ENCODE measurements at regions of chr3 and their contacts with region 1.

Region 1: DNA sequence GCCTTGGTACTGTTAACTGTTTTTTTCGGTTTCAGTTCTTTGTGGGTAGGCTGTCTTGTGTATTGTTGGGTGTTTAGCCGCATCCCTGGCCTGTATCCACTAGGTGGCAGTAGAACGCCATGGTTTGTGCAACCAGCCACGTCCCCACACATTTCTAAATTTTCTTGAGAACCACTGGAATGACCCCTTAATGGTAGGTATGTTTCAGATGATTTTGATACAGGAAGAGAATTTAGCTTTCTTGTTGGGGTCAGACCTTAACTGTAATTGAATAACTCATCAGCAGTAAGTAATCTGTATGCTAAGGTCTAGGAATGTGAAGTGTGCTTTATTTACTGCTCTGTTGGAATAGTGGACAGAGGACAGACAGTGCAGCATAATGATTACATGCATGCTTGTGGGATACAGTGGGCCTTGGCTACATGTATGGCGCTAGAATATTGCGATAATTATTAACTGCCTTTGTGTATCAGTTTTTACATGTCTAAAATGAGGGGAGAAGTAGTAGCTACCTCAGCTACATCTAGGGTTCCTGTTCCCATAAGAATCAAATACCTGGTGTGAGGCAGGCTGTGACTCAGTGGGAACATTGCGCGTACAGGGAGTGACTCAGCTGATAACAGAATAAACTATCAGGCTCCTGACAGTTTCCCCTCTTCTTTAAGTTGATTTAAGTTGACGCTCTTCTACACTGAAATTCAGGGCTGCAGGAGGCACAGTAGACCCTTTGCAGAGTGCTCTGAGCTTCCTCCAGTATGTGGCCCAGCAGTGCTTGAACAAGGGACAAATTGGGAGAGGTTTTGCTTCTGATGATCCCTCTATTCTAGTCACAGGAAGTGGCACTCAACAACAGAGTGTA is 25.0 kb upstream of the GPR171 start:
- DNase-seq: peak; percentile 57 to 78
- H3K4me3 ChIP-seq: no peak overlapping the region
- H3K4me3 Mint-ChIP-seq: peak overlapping the region; percentile 35
- H3K27ac Mint-ChIP-seq: no peak overlapping the region
- H3K4me1 ChIP-seq: peaks cover 28% of the 10 kb centered on the region
- H3K4me1 Mint-ChIP-seq: peaks cover 26% of the 10 kb centered on the region
- H3K27me3 ChIP-seq: no peaks in the 10 kb centered on the region
- H3K27me3 Mint-ChIP-seq: no peaks in the 10 kb centered on the region
- CTCF ChIP-seq: peak; percentile 74 to 78

Region 2: GRCh38 chr3:150743508-150743907 is 484.5 kb before region 1 on chr3:
- CTCF ChIA-PET with region 1: no interaction called
- POLR2A ChIA-PET with region 1: no interaction called
- intact Hi-C with region 1: no loop called
- DNase-seq: no peak
- H3K4me3 ChIP-seq: no peak overlapping the region
- H3K4me3 Mint-ChIP-seq: no peak overlapping the region
- H3K27ac Mint-ChIP-seq: no peak overlapping the region
- H3K4me1 ChIP-seq: peaks cover 18% of the 10 kb centered on the region
- H3K4me1 Mint-ChIP-seq: no peaks in the 10 kb centered on the region
- H3K27me3 ChIP-seq: no peaks in the 10 kb centered on the region
- H3K27me3 Mint-ChIP-seq: no peaks in the 10 kb centered on the region
- CTCF ChIP-seq: no peak

Region 3: DNA sequence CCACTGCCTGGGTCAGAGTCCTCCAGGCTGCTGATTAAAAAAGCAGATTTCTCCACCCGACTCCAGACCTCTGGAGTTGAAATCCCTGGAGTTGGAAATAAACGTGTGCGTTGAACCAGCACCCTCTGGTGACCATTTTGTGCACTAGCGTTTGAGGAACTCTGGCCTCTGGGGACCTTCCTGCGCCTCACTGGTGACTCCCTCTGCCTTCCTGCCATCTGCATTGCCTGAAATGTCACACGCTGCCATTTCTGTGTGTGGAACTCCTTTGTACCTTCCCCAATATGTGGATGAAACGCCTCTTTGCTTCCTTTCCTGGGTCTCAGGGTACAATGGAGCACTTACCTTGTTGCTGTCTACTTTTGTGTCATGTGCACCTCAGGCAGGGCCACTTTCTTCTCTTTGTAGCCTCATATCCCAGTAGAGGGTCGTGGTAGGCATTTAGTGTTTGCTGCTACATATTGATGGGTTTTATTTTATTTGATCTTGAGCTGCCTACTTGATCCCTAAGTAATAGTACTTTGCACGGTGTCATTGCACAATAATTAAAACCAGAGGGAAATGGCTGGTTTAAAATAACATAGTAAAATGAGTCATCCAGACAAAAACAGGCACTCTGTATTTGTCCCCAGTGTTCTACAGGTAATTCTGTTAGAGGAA is 81.8 kb before region 1 on chr3:
- CTCF ChIA-PET with region 1: no interaction called
- POLR2A ChIA-PET with region 1: no interaction called
- intact Hi-C with region 1: no loop called
- DNase-seq: peak; percentile 77 to 80
- H3K4me3 ChIP-seq: no peak overlapping the region
- H3K4me3 Mint-ChIP-seq: no peak overlapping the region
- H3K27ac Mint-ChIP-seq: no peak overlapping the region
- H3K4me1 ChIP-seq: peaks cover 32% of the 10 kb centered on the region
- H3K4me1 Mint-ChIP-seq: peaks cover 30% of the 10 kb centered on the region
- H3K27me3 ChIP-seq: no peaks in the 10 kb centered on the region
- H3K27me3 Mint-ChIP-seq: no peaks in the 10 kb centered on the region
- CTCF ChIP-seq: peak; percentile 81 to 88

Region 4: DNA sequence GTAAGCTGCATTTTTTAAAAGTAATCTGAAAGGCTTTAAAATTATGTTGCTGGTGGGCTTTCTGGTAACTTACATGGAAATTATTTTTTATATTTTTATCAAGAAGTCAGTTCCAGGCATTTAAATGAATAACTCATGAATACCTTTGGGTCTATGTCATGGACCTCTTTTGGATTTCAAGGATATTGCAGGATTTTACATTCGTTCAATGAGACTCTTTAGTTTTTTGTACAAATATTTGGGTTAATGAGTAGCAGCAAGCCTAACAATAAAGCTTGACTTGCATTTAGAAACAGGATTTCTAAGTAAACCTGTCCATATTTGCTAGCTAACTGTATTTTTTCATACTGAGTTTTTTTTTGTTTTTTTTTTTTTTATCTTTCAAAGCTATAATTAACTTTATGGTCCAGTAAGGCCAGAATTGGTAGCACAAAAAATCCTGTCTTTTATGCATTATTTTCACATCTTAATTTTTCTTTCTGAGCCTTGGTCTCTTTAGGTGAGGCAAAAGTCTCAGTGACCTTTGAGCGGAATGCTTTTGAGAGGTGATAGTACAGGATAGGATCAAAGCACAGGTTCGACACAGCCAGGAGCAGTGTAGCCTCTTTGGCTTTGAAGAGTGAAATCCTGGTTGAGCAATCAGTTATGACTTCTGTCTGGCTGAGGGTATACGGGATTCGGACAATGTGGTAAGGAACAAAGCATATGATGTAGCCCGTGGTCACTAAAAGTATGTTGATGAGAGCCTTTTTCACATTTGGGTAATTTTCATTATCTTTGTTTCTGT is 29.9 kb before region 1 on chr3:
- CTCF ChIA-PET with region 1: interaction called, 4 read pairs
- POLR2A ChIA-PET with region 1: no interaction called
- intact Hi-C with region 1: loop called (anchors 1 kb)
- DNase-seq: peak; percentile 85 to 87
- H3K4me3 ChIP-seq: no peak overlapping the region
- H3K4me3 Mint-ChIP-seq: peak overlapping the region; percentile 53
- H3K27ac Mint-ChIP-seq: peak overlapping the region; percentile 95
- H3K4me1 ChIP-seq: peaks cover 52% of the 10 kb centered on the region
- H3K4me1 Mint-ChIP-seq: peaks cover 28% of the 10 kb centered on the region
- H3K27me3 ChIP-seq: no peaks in the 10 kb centered on the region
- H3K27me3 Mint-ChIP-seq: no peaks in the 10 kb centered on the region
- CTCF ChIP-seq: no peak

Region 5: GRCh38 chr3:151305101-151305750 is 77.2 kb after region 1 on chr3:
- CTCF ChIA-PET with region 1: no interaction called
- POLR2A ChIA-PET with region 1: no interaction called
- intact Hi-C with region 1: loop called (anchors 1 kb)
- DNase-seq: peak; percentile 91 to 93
- H3K4me3 ChIP-seq: no peak overlapping the region
- H3K4me3 Mint-ChIP-seq: peak overlapping the region; percentile 40
- H3K27ac Mint-ChIP-seq: peak overlapping the region; percentile 82
- H3K4me1 ChIP-seq: peaks cover 13% of the 10 kb centered on the region
- H3K4me1 Mint-ChIP-seq: peaks cover 31% of the 10 kb centered on the region
- H3K27me3 ChIP-seq: no peaks in the 10 kb centered on the region
- H3K27me3 Mint-ChIP-seq: no peaks in the 10 kb centered on the region
- CTCF ChIP-seq: peak in 1 of 2 experiments; percentile 65

Region 6: DNA sequence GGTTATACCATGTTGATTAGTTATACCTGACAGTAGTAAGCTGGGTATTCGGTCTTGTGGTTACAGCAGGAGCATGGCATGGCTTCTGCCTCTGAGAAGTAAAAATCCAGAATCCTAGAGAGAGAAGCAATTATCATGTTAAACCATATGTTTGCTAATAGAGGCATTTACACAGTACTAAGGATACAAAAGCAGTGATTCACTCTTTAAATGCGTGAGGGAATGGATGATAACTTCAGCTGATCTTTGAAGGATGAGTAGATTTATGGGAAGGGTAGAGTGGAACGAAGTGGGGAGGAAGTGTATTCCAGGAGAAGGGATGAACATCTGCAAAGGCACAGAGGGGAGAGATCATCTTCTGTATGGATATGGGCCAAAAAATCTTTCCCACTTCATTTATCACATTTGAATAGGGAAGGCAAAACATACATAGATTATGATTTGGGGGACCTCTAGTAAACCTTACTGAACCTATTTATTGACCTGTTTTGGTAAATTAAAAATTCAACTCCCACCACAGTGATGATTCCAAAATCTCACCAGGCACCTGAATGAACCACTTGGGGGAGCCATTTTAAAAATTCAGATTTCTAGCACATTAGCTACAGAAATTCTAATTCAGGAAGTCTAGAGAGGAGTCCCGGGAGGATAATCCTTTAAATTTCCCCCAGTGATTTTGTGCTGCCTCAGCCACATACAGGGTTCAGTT is 197.7 kb after region 1 on chr3:
- CTCF ChIA-PET with region 1: no interaction called
- POLR2A ChIA-PET with region 1: no interaction called
- intact Hi-C with region 1: loop called (anchors 10 kb)
- DNase-seq: no peak
- H3K4me3 ChIP-seq: no peak overlapping the region
- H3K4me3 Mint-ChIP-seq: no peak overlapping the region
- H3K27ac Mint-ChIP-seq: no peak overlapping the region
- H3K4me1 ChIP-seq: no peaks in the 10 kb centered on the region
- H3K4me1 Mint-ChIP-seq: peaks cover 6% of the 10 kb centered on the region
- H3K27me3 ChIP-seq: no peaks in the 10 kb centered on the region
- H3K27me3 Mint-ChIP-seq: no peaks in the 10 kb centered on the region
- CTCF ChIP-seq: peak in 1 of 2 experiments; percentile 1